Breast epithelium (tissue), 4 donors: ENCODE measurements at regions of chr18 and their contacts with region 1.

Region 1: DNA sequence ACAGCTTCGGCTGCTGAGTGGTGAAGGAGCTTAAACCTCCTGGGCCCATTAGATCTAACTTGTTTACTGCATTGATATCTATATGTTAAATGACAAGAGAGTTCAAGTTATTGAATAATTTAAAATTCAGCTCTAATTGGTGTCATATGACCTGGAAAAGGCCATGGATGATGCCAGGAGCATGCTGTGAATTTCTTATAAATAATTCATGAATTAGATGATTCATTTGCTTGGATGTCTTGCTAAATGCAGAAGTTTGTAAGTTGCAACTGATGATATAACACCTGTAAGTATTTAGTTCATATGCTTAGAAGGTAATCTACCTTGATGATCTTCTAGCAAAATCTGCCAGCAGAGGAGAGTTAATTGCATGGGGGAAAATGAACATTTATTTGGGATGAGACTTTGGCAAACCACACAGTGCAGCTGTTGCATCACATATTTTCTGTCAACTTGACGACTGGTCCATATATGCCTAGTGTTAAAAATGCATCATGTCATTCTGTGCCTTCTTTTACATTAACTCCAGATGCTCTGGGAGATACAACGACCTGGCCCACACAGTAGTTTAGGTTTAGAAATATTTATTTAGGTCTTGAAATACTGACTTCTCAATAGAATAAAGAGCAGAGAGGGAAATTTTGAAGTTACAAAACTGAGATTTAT is 226.3 kb downstream of the KIAA1328 start:
- DNase-seq: no peak
- H3K4me3 ChIP-seq: no peak overlapping the region
- H3K27ac ChIP-seq: no peak overlapping the region
- H3K4me1 ChIP-seq: no peaks in the 10 kb centered on the region
- H3K27me3 ChIP-seq: no peaks in the 10 kb centered on the region
- CTCF ChIP-seq: no peak
- POLR2A ChIP-seq: no peak

Region 2: DNA sequence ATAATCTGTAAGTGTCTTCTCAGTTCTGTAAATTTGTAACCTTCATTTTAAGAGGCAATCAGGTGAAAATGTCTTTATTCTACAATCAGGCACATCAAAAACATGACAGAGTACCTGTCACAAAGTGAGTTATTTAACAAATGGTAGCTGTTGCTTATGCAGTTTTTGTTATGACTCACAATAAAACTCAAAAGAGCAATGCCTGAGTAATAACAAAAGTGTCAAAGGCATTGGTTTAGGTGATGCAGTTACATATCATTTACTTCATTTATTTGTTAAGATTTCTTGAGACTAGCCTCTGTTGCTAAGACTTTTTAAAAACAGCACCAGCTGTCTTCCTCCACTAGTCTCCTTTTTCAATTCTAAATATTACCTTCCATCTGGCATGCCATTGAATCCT is 48.5 kb before region 1 on chr18:
- intact Hi-C with region 1: loop called (anchors 10 kb)
- DNase-seq: no peak
- H3K4me3 ChIP-seq: no peak overlapping the region
- H3K27ac ChIP-seq: no peak overlapping the region
- H3K4me1 ChIP-seq: no peaks in the 10 kb centered on the region
- H3K27me3 ChIP-seq: no peaks in the 10 kb centered on the region
- CTCF ChIP-seq: no peak
- POLR2A ChIP-seq: no peak

Region 3: DNA sequence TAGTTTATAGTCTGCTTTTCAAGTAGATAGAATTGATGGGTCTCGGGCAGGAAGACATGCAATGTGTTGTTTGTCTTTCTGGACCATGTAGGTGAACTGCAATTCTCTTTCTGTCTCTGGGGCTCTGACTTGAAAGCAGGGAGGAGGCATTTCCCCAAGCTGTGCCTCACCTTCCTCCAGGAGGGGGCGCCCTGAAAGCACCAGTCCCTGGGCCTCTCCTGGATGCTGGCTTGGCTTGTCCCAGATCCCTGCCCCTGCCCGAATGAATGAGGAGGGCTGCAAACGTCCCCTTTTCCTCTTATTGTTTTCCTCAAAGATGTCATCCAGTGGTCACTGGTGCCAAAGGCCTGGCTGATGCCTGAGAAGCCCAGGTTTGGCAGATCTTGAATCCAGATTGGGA is 239.7 kb after region 1 on chr18:
- intact Hi-C with region 1: no loop called
- DNase-seq: no peak
- H3K4me3 ChIP-seq: no peak overlapping the region
- H3K27ac ChIP-seq: no peak overlapping the region
- H3K4me1 ChIP-seq: peaks cover 5 to 6% of the 10 kb centered on the region in 2 donors
- H3K27me3 ChIP-seq: no peaks in the 10 kb centered on the region
- CTCF ChIP-seq: no peak
- POLR2A ChIP-seq: no peak